Activated CD4-positive, alpha-beta T cell treated with anti-CD3 and anti-CD28 coated beads, Interleukin-2, amount 10 ng/mL, durations not matched to agents 24 days and 14 days (primary cell): ENCODE measurements at regions of chr17 and their contacts with region 1.

Region 1: GRCh38 chr17:77444984-77445759 is 304.4 kb downstream of the SEC14L1 start:
- DNase-seq: peak; percentile 95
- H3K4me3 Mint-ChIP-seq: peak overlapping the region; percentile 81
- H3K27ac Mint-ChIP-seq: peak overlapping the region; percentile 92
- H3K4me1 Mint-ChIP-seq: peaks cover 84% of the 10 kb centered on the region
- H3K27me3 Mint-ChIP-seq: no peaks in the 10 kb centered on the region

Region 2: DNA sequence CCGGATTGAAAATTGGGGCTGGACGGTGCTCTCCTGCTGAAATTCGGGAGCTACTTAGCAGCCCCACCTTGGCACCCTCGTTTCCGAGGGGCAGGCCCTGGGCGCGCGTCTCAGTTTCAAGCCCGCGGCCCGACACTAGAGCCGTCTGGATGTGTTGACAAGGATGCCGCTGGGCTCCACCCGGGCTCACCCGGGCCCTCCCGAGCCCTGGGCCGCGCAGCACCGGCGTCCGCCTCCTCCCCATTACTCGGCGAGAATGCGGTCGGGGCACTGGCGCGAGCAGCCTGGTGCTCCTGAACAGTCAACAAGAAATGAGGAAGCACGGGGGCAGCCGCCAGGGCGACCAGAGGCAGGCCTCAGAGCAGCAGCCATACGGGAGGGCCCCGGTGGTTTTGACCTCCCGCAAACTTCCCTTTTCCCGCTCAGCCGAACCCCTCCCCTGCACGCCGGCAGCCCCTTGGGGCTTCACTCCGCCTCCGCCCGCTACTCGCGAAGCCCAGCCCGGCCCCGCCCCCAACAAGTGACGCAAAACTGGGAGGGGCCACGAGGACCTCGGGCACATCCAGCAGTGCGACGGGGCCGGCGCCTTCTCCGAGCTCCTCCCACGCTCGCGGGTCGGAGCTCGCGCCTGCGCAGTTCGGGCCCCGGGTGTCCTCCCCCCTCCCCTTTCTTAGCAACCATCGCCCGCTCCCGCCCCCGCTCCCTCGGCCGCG is 304.9 kb before region 1 on chr17:
- intact Hi-C with region 1: no loop called
- DNase-seq: peak; percentile 100
- H3K4me3 Mint-ChIP-seq: peak overlapping the region; percentile 65
- H3K27ac Mint-ChIP-seq: peak overlapping the region; percentile 94
- H3K4me1 Mint-ChIP-seq: peaks cover 55% of the 10 kb centered on the region
- H3K27me3 Mint-ChIP-seq: no peaks in the 10 kb centered on the region

Region 3: GRCh38 chr17:77372444-77373298 is 72.5 kb before region 1 on chr17:
- intact Hi-C with region 1: loop called (anchors 2 kb)
- DNase-seq: peak; percentile 95
- H3K4me3 Mint-ChIP-seq: peak overlapping the region; percentile 81
- H3K27ac Mint-ChIP-seq: peak overlapping the region; percentile 84
- H3K4me1 Mint-ChIP-seq: peaks cover 57% of the 10 kb centered on the region
- H3K27me3 Mint-ChIP-seq: no peaks in the 10 kb centered on the region

Region 4: DNA sequence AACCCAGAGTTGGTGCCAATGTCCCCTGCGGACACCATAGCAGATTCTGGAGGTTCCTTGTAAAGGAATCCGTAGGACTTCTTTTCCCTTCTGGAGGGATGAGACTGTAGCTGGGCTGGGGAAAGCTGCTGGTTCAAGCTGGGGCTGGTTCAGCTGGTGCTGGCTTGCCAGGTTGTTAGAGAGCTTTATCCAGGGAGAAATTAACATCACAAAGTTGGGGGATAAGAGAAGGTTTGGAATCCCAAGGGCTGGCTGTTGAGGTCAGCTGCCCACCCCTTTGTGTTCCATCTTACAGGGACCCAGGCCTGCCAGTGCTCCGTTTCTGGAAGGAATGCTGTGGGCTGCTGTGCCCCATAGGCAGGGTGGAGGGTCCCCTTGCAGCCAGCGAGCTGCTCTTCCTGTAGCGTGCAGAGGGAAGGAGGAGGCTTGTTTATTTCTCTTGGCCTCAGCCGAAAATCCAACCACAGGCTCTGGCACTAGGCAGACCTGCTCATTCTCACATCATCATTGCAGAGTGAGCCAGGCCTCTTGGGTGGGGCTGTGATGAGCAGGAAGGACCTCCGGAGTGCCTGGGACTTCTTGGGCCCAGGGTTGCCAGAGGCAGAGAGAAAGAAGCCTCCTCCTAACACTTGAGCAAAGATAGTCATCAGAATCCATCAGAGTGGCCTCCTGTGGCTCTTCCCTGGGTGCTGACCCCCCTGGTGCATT is 53.4 kb before region 1 on chr17:
- intact Hi-C with region 1: no loop called
- DNase-seq: peak; percentile 88
- H3K4me3 Mint-ChIP-seq: peak overlapping the region; percentile 87
- H3K27ac Mint-ChIP-seq: peak overlapping the region; percentile 90
- H3K4me1 Mint-ChIP-seq: peaks cover 74% of the 10 kb centered on the region
- H3K27me3 Mint-ChIP-seq: no peaks in the 10 kb centered on the region

Region 5: GRCh38 chr17:77429919-77430752 is 15.0 kb before region 1 on chr17:
- intact Hi-C with region 1: loop called (anchors 1 kb)
- DNase-seq: peak; percentile 94
- H3K4me3 Mint-ChIP-seq: peak overlapping the region; percentile 35
- H3K27ac Mint-ChIP-seq: peak overlapping the region; percentile 62
- H3K4me1 Mint-ChIP-seq: peaks cover 72% of the 10 kb centered on the region
- H3K27me3 Mint-ChIP-seq: no peaks in the 10 kb centered on the region

Region 6: GRCh38 chr17:77465358-77466041 is 20.3 kb after region 1 on chr17:
- intact Hi-C with region 1: loop called (anchors 1 kb)
- DNase-seq: peak; percentile 93
- H3K4me3 Mint-ChIP-seq: peak overlapping the region; percentile 77
- H3K27ac Mint-ChIP-seq: peak overlapping the region; percentile 91
- H3K4me1 Mint-ChIP-seq: peaks cover 71% of the 10 kb centered on the region
- H3K27me3 Mint-ChIP-seq: no peaks in the 10 kb centered on the region

Region 7: GRCh38 chr17:77471984-77472461 is 26.9 kb after region 1 on chr17:
- intact Hi-C with region 1: loop called (anchors 1 kb)
- DNase-seq: no peak
- H3K4me3 Mint-ChIP-seq: peak overlapping the region; percentile 60
- H3K27ac Mint-ChIP-seq: peak overlapping the region; percentile 83
- H3K4me1 Mint-ChIP-seq: peaks cover 83% of the 10 kb centered on the region
- H3K27me3 Mint-ChIP-seq: no peaks in the 10 kb centered on the region

Region 8: DNA sequence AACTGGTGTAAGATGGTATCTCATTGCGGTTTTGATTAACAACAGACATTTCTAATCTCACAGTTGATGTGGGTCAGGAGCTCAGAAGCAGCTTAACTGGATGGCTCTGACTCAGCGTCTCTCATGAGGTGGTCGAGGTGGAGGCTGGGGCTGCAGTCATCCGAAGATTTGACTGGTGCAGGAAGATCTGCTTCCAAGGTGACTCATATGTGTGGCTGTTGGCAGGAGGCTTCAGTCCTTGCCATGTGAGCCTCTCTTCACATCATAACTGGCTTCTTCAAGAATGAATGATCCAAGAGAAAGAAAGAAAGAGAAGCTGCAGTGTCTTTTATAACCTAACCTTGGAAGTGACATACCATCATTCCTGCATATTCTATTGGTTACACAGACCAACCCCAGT is 71.7 kb after region 1 on chr17:
- intact Hi-C with region 1: no loop called
- DNase-seq: no peak
- H3K4me3 Mint-ChIP-seq: no peak overlapping the region
- H3K27ac Mint-ChIP-seq: no peak overlapping the region
- H3K4me1 Mint-ChIP-seq: no peaks in the 10 kb centered on the region
- H3K27me3 Mint-ChIP-seq: peaks cover 4% of the 10 kb centered on the region